Activated naive CD4-positive, alpha-beta T cell treated with anti-CD3 and anti-CD28 coated beads for 36 hours (primary cell): ENCODE measurements at regions of chr9 and their contacts with region 1.

Region 1: DNA sequence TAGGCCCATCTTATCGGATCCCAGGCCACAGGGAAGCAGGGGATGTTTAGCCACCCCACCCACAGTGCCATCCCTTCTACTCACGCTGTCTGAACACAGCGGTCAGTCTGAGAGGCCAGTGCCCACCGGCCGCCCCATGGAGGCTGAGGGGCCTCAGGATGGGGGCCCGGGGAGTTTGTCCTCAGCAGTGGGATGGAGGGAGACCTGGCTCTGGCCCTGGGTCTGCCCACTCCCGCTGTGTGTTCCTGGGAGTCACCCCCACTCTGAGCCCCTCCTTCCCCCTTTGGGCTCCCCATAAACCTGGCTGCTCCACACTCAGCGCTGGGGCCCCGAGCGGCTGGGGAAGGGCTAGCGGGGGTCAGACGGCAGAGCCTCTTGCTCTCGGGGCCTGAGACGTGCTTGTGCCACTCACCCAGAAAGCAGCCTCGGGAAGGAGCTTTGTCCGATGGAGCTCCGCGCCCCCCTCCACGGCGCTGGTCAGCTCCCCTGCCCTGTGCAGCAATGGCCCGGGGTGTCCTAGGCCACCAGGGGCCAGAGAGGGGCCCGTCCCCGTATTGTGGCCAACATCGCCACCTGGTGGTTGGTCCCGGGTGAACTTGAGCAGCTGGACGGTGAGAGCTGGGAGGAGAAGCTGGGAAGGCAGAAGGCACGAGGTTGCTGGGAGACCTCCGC is 10.9 kb upstream of the LAMC3 start:
- DNase-seq: peak; percentile 63
- H3K4me3 Mint-ChIP-seq: no peak overlapping the region
- H3K27ac Mint-ChIP-seq: no peak overlapping the region
- H3K4me1 Mint-ChIP-seq: no peaks in the 10 kb centered on the region
- H3K27me3 Mint-ChIP-seq: peaks cover 5% of the 10 kb centered on the region

Region 2: DNA sequence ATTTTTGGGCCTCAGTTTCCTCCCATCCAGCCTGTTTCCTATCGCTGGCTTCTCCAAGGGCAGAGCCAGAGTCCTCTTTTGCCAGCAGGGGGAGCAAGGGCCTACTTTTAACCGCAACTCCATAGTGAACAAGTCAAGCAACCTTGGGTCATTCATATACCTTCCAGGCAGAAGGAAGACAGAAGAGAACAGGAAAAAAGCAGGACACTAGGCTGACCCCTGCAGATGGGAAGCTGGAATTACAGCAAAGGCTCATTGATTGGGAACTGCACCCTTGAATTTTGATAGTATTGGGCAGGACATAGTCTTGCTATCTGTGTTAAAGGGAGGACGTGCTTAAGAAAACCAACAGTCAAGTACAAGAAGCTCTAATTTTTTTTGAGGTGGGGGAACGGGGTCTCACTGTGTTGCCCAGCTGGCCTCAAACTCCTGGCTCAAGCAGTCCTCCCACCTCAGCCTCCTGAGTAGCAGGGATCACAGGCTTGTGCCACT is 131.5 kb before region 1 on chr9:
- CTCF ChIA-PET with region 1: interaction called, 6 read pairs
- intact Hi-C with region 1: loop called (anchors 5 kb)
- DNase-seq: peak; percentile 79
- H3K4me3 Mint-ChIP-seq: no peak overlapping the region
- H3K27ac Mint-ChIP-seq: no peak overlapping the region
- H3K4me1 Mint-ChIP-seq: no peaks in the 10 kb centered on the region
- H3K27me3 Mint-ChIP-seq: no peaks in the 10 kb centered on the region

Region 3: GRCh38 chr9:130940693-130941576 is 57.1 kb before region 1 on chr9:
- CTCF ChIA-PET with region 1: no interaction called
- intact Hi-C with region 1: loop called (anchors 1 kb)
- DNase-seq: peak; percentile 87
- H3K4me3 Mint-ChIP-seq: no peak overlapping the region
- H3K27ac Mint-ChIP-seq: no peak overlapping the region
- H3K4me1 Mint-ChIP-seq: peaks cover 10% of the 10 kb centered on the region
- H3K27me3 Mint-ChIP-seq: peaks cover 52% of the 10 kb centered on the region